HEK293 (cell line): ENCODE measurements at regions of chr1 and their contacts with region 1.

Region 1: DNA sequence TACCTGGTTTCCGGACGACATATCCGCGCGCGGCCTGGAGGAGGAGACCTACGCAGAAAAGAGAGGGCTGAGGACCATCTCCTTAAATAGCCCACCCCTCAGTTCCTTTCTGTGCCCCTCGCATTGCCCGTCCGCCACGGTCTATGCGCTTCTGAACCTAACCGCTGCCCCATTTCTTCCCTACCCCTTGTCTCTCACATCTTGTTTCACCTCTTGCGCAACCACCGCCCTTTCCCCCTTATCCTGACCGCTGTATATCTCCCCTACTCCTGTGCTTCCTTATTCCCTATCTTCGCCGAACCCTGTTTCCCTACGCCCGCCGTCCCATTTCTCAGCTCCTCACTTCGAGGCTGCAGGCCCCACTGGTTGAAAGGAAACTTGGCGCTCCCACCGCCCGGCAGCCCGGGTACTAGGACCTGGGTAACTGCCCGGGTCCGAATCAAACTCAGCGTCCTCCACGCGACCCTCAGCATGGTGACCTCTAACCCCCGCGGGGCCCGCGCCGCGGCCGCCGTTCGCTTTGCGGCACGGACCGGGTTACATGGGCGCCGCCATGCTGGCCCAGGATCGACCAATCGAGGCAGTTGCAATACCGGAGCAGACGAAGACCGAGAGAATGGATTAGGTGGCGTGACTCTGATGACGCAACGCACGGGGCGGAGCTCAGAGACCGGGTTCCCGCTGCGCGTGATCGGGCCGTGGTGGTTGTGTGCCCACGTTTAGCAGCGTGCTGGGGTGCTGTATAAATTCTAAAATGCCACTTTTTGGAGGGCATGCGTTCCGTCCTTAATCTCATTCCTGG is at the start of gene MRPS15:
- H3K4me3 ChIP-seq: peak within 1 kb of the TSS; percentile 93
- H3K27ac ChIP-seq: peak within 1 kb of the TSS; percentile 56
- H3K4me1 ChIP-seq: no peaks in the 10 kb centered on the region
- CTCF ChIP-seq: peak; percentile 55; the same call in 1 of the 2 replicates

Region 2: GRCh38 chr1:36134505-36135329 is 329.3 kb before region 1 on chr1:
- CTCF ChIA-PET with region 1: no interaction called
- POLR2A ChIA-PET with region 1: no interaction called
- H3K4me3 ChIP-seq: no peak overlapping the region
- H3K27ac ChIP-seq: no peak overlapping the region
- H3K4me1 ChIP-seq: no peaks in the 10 kb centered on the region
- CTCF ChIP-seq: peak; percentile 62

Region 3: GRCh38 chr1:36155408-36156328 is 308.3 kb before region 1 on chr1 and contains the start of gene MAP7D1:
- CTCF ChIA-PET with region 1: no interaction called
- POLR2A ChIA-PET with region 1: no interaction called
- H3K4me3 ChIP-seq: peak within 1 kb of the TSS; percentile 86
- H3K27ac ChIP-seq: peak within 1 kb of the TSS; percentile 98
- H3K4me1 ChIP-seq: peaks cover 5% of the 10 kb centered on the region
- CTCF ChIP-seq: no peak

Region 4: DNA sequence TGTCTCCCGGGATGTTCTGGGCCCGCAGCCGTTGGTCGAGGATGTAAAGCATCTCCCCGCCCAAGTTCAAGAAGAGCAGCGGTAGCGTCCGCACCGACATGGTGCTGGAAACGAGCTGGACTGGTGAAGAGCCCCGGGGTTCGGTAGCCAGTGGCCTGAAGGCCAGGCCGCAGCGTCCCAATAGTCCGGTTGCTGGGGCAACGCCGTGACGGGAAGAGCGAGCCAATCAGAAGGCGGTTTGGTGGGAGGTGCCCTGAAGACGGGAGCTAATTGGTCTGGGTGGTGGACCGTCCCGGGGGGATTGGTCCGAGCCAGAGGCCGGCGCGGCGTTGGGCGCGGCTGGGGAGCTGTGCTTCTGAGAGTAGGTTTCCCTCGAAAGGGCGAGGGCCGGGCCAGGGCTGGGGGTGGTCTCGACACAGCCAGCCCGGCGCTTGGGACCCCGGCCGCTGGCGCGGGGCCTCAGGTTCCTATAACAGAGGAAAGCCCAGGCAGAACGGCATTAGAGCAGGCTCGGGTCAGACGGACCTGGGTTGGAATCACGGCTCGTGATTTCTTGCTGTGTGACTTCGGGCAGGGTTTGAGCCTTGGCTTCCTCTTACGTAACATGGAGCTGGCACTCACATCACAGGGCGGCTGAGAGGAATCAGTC is 13.6 kb before region 1 on chr1 and contains the start of gene OSCP1:
- CTCF ChIA-PET with region 1: interaction called, 3 read pairs
- POLR2A ChIA-PET with region 1: interaction called, 54 read pairs
- H3K4me3 ChIP-seq: peak within 1 kb of the TSS; percentile 61
- H3K27ac ChIP-seq: peak within 1 kb of the TSS; percentile 55
- H3K4me1 ChIP-seq: no peaks in the 10 kb centered on the region
- CTCF ChIP-seq: no peak

Region 5: DNA sequence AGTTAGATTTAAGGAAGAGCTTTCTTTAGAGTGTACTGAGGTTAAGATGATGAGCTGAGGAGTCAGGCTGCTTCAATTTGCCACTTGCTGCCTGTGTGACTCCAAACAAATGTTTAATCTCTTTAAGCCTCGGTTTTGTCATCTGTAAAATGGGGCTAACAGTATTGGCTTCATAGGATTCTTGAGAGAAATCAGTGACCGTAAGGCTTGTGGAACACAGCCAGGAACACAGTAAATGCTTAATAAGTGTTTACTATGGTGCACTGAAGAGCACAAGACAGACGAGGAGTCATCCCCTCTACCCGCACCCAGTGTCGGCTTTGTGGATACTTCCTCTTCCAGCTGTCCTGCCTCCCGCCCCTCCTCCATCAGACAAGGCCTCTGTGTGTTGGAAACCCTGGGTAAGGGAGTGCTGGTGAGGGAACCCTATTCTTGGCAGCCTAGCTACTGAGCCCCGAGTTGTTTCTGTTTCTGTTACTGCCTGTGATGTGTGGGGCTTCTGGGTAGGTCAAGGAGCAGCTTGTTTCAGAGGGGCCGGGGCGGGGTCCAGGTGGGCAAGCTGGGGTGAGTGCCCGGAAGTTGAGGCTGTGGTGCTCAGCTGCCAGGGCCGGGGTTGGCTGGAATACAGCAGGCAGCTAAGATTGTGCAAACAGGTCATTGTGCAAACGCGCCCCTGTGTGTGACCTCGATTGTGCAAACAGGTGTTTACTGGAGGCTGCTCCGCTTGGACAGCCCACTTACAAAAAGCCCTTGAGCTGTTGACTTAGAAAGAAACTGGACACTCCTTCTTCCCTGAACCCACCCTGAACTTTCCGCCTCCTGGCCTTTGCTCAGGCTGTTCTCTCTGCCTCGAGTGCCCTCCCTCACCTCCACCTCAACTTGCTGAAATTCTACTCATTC is 22.7 kb after region 1 on chr1:
- CTCF ChIA-PET with region 1: no interaction called
- POLR2A ChIA-PET with region 1: no interaction called
- H3K4me3 ChIP-seq: no peak overlapping the region
- H3K27ac ChIP-seq: no peak overlapping the region
- H3K4me1 ChIP-seq: no peaks in the 10 kb centered on the region
- CTCF ChIP-seq: no peak